ENCODE measurements at regions of chr2 and their contacts with region 1.

Region 1: DNA sequence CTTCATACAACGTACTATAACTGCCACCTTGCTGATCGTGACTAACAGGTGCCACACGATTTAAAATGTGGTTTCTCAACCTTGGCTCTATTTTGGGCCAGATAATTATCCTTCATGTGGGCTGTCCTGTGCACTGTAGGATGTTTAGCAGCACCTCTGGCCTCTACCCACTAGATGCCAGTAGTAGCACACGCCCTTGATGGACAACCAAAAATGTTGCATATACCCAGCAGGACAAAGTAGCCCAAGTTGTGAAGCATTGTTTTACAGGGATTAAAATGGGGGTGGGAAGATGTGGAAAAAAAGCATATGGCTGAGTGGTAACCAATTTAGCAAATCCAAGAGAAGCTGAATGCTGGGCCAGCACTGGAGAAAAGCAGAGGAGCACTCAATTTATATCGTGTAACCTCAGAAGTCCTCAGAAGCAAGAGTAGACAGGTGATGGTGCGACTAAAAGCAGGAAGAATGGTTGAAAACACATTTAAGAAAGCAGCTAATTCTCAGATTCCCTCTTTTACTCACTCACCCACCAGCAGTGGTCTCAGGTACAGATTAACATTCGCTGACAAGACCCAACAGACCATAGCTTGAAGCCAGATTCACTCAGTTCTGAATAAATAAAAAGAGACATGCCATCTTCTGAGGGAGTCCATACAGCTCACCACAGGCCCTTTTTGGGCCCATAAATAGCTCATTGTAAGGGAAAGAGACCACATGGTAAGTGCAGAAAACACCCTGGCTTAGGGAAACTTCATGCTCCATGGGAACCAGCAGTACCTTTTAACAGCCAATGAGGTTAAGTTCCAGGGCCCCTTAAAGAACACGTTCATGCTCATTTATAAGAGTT is 50.6 kb downstream of the RAPH1 start:
- DNase-seq: peak in 8 of 9 donors; percentile 20 to 69 (median 60)
- ATAC-seq: peak; percentile 92
- H3K4me3 ChIP-seq: no peak overlapping the region
- H3K4me3 Mint-ChIP-seq: peak overlapping the region in 5 of 10 donors; percentile 2 to 38 (median 14)
- H3K27ac ChIP-seq: no peak overlapping the region
- H3K27ac Mint-ChIP-seq: peak overlapping the region in 7 of 9 donors; percentile 3 to 88 (median 24)
- H3K4me1 ChIP-seq: peaks cover 0 to 7% of the 10 kb centered on the region in 2 donors
- H3K4me1 Mint-ChIP-seq: peaks cover 2 to 9% (median 7%) of the 10 kb centered on the region in 7 donors
- H3K27me3 ChIP-seq: no peaks in the 10 kb centered on the region
- H3K27me3 Mint-ChIP-seq: no peaks in the 10 kb centered on the region

Region 2: GRCh38 chr2:203280428-203281064 is 203.9 kb before region 1 on chr2:
- CTCF ChIA-PET with region 1: no interaction called
- POLR2A ChIA-PET with region 1: no interaction called
- intact Hi-C with region 1: no loop called
- DNase-seq: no peak
- ATAC-seq: no peak
- H3K4me3 ChIP-seq: no peak overlapping the region
- H3K4me3 Mint-ChIP-seq: no peak overlapping the region
- H3K27ac ChIP-seq: no peak overlapping the region
- H3K27ac Mint-ChIP-seq: no peak overlapping the region
- H3K4me1 ChIP-seq: no peaks in the 10 kb centered on the region
- H3K4me1 Mint-ChIP-seq: peaks cover 0 to 8% (median 0%) of the 10 kb centered on the region in 7 donors
- H3K27me3 ChIP-seq: no peaks in the 10 kb centered on the region
- H3K27me3 Mint-ChIP-seq: no peaks in the 10 kb centered on the region

Region 3: DNA sequence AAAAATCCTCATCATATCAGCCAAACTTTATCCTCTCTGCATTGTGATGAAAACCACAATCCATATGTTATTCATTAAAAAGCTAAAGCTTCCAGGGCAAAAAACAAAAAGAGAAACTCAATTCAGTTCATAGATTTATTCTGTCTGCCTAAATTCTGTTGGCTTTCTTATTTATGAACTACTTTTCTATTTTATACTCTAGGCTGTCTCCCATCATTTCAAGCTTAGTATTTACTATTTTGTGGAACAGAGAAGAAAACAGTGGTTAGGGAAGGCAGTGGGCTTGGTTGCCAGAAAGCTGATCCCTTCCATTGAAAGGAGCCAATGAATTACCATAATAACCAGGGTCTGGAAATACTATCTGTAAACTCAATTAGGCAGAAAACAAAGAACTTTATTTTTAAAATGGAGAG is 21.2 kb before region 1 on chr2:
- CTCF ChIA-PET with region 1: no interaction called
- POLR2A ChIA-PET with region 1: no interaction called
- intact Hi-C with region 1: no loop called
- DNase-seq: no peak
- ATAC-seq: no peak
- H3K4me3 ChIP-seq: no peak overlapping the region
- H3K4me3 Mint-ChIP-seq: no peak overlapping the region
- H3K27ac ChIP-seq: no peak overlapping the region
- H3K27ac Mint-ChIP-seq: no peak overlapping the region
- H3K4me1 ChIP-seq: no peaks in the 10 kb centered on the region
- H3K4me1 Mint-ChIP-seq: peaks cover 0 to 3% (median 0%) of the 10 kb centered on the region in 7 donors
- H3K27me3 ChIP-seq: no peaks in the 10 kb centered on the region
- H3K27me3 Mint-ChIP-seq: no peaks in the 10 kb centered on the region

Region 4: DNA sequence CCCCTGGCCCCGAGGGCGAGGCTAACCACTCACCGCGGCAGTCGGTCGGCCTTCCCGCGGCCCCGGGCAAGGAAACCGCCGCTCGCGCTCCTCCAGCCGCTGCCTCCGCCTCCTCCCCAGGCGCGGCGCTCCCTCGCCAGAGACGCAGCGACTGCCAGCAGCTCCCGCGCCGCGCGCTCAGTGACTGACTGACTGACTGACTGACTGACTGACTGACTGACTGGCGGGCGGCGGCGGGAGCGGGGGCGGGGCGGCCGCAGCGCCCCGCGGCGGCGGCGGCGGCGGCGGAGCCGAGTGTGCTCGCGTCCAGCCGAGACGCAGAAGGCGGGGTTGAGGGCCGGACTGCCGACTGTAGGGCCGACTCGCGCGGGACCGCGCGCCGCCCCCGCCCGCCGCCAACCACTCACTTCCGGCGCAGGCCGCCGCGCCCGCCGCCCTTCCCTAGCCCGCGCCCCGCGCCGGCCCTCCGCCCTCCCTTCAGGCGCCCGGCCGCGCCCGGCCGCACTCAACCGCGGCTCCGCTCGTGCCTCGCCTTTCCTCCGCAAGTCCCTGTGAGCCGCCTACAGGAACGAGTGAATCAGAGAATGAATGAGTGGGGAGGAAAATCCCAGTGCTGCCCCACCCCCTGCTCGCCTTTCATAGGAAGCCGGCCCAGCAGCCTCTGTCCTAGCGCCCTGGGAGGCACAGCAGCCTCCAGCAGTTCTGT is 50.7 kb after region 1 on chr2 and contains the start of gene RAPH1:
- CTCF ChIA-PET with region 1: interaction called, 3 read pairs
- POLR2A ChIA-PET with region 1: no interaction called
- intact Hi-C with region 1: loop called in 1 of 2 experiments (anchors 1 kb)
- DNase-seq: peak; percentile 24 to 72 (median 51)
- ATAC-seq: peak; percentile 77
- H3K4me3 ChIP-seq: peak within 1 kb of the TSS; percentile 71
- H3K4me3 Mint-ChIP-seq: peak within 1 kb of the TSS; percentile 79 to 95 (median 90)
- H3K27ac ChIP-seq: peak within 1 kb of the TSS; percentile 49
- H3K27ac Mint-ChIP-seq: peak within 1 kb of the TSS; percentile 32 to 90 (median 73)
- H3K4me1 ChIP-seq: peaks cover 10 to 15% of the 10 kb centered on the region in 2 donors
- H3K4me1 Mint-ChIP-seq: peaks cover 16 to 30% (median 28%) of the 10 kb centered on the region in 7 donors
- H3K27me3 ChIP-seq: no peaks in the 10 kb centered on the region
- H3K27me3 Mint-ChIP-seq: peaks cover 6 to 75% (median 16%) of the 10 kb centered on the region in 5 donors
- total RNA-seq, gene RAPH1: 1.8 to 5.5 (median 3.0) TPM

Region 5: DNA sequence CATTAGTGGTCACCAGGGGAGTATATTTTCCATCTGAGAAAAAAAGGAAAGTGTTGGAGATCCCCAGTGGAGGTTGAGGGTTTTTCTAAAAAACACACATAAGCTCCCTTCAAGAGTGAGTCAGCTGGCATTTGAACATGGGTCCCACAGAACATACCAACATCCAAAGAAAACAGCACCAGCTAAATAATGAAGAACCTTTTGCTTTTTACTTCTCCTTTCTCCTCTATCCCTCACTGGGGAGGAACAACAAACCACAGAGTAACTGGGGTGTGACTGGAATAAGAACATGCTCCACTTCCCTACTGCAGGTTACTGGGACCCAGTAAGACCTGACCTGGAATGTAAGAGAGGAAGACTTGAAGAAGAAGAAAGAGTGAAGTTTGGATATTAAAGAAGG is 107.2 kb after region 1 on chr2:
- CTCF ChIA-PET with region 1: no interaction called
- POLR2A ChIA-PET with region 1: no interaction called
- intact Hi-C with region 1: no loop called
- DNase-seq: no peak
- ATAC-seq: peak; percentile 59
- H3K4me3 ChIP-seq: no peak overlapping the region
- H3K4me3 Mint-ChIP-seq: no peak overlapping the region
- H3K27ac ChIP-seq: no peak overlapping the region
- H3K27ac Mint-ChIP-seq: peak overlapping the region in 2 of 9 donors; percentile 5 to 42
- H3K4me1 ChIP-seq: no peaks in the 10 kb centered on the region
- H3K4me1 Mint-ChIP-seq: peaks cover 0 to 9% (median 4%) of the 10 kb centered on the region in 7 donors
- H3K27me3 ChIP-seq: no peaks in the 10 kb centered on the region
- H3K27me3 Mint-ChIP-seq: peaks cover 0 to 57% (median 0%) of the 10 kb centered on the region in 5 donors

Region 6: GRCh38 chr2:203636588-203637470 is 152.3 kb after region 1 on chr2:
- CTCF ChIA-PET with region 1: no interaction called
- POLR2A ChIA-PET with region 1: no interaction called
- intact Hi-C with region 1: no loop called
- DNase-seq: no peak
- ATAC-seq: peak; percentile 16
- H3K4me3 ChIP-seq: no peak overlapping the region
- H3K4me3 Mint-ChIP-seq: peak overlapping the region in 8 of 10 donors; percentile 0 to 58 (median 26)
- H3K27ac ChIP-seq: no peak overlapping the region
- H3K27ac Mint-ChIP-seq: peak overlapping the region in 4 of 9 donors; percentile 10 to 79 (median 48)
- H3K4me1 ChIP-seq: peaks cover 8 to 11% of the 10 kb centered on the region in 2 donors
- H3K4me1 Mint-ChIP-seq: peaks cover 14 to 35% (median 30%) of the 10 kb centered on the region in 7 donors
- H3K27me3 ChIP-seq: no peaks in the 10 kb centered on the region
- H3K27me3 Mint-ChIP-seq: peaks cover 0 to 3% (median 0%) of the 10 kb centered on the region in 5 donors

Region 7: DNA sequence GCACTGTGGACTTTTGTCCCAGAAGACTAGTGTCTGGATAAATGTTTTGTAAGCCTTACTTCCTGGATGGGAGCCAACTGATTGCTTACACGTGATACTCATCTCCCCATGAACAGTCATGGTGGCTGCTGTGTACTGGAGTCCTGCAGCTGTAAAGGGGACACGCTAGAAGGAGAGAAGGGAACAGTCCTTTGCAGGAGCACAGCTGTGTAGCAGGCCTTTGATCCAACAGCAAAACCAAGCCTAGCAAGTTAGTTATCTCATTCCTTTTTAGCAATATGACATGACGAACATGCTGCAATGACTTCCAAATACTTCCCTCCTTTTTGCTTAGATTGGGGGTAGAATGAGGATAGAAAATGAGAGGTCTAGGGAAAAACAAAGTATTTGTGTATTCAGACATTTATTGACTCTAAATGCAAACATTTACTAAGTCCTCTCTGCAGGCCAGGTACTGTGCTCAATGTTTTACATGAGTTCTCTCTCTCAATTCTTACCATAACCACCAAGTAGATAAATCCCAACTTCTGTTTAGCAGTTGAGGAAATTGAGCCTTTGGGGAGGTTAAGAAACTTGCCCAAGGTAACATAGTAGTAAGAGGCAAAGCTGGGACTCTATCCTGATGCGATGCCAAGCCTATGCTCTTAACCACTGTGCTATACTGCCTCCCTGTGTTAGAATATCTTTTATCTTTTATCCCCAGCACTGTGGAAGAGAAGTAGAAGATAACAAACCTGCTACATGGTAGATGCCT is 166.5 kb after region 1 on chr2:
- CTCF ChIA-PET with region 1: interaction called, 3 read pairs
- POLR2A ChIA-PET with region 1: no interaction called
- intact Hi-C with region 1: loop called (anchors 1 kb)
- DNase-seq: peak in 4 of 9 donors; percentile 8 to 24 (median 12)
- ATAC-seq: peak; percentile 64
- H3K4me3 ChIP-seq: no peak overlapping the region
- H3K4me3 Mint-ChIP-seq: no peak overlapping the region
- H3K27ac ChIP-seq: no peak overlapping the region
- H3K27ac Mint-ChIP-seq: peak overlapping the region in 4 of 9 donors; percentile 5 to 48 (median 34)
- H3K4me1 ChIP-seq: no peaks in the 10 kb centered on the region
- H3K4me1 Mint-ChIP-seq: peaks cover 20 to 40% (median 29%) of the 10 kb centered on the region in 7 donors
- H3K27me3 ChIP-seq: no peaks in the 10 kb centered on the region
- H3K27me3 Mint-ChIP-seq: no peaks in the 10 kb centered on the region

Region 8: DNA sequence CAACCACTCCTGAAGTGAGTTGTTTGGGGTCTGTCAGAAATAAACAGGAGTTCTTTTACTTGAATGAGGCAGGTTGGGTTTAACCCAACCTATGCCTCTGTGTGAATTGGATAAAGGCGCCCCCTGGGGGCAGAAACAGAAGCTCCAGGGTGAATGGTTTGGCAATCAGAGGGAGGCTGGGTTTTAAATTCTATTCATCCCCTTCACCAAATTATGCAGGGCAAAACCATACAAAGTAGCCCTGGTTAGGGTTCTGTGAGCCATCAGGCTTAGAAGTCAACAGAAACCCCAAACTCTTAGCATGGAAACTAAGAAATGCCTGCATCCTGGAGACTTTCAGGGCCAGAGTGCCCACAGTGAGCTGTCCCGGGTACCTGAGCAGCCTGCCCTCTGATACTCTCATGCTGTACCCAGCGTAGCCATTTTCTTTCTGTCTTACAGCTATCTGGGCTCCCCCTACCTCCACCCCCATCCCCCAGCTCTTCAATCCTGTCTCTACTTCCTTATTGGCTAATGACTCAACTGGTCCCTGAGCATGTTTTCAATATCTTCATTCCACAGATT is 693.6 kb after region 1 on chr2:
- CTCF ChIA-PET with region 1: no interaction called
- POLR2A ChIA-PET with region 1: no interaction called
- intact Hi-C with region 1: loop called in 1 of 2 experiments (anchors 2 kb)
- DNase-seq: peak; percentile 35 to 75 (median 63)
- ATAC-seq: peak; percentile 73
- H3K4me3 ChIP-seq: no peak overlapping the region
- H3K4me3 Mint-ChIP-seq: no peak overlapping the region
- H3K27ac ChIP-seq: no peak overlapping the region
- H3K27ac Mint-ChIP-seq: no peak overlapping the region
- H3K4me1 ChIP-seq: no peaks in the 10 kb centered on the region
- H3K4me1 Mint-ChIP-seq: peaks cover 0 to 10% (median 0%) of the 10 kb centered on the region in 7 donors
- H3K27me3 ChIP-seq: no peaks in the 10 kb centered on the region
- H3K27me3 Mint-ChIP-seq: peaks cover 8 to 36% (median 12%) of the 10 kb centered on the region in 5 donors